ENCODE measurements at regions of chr15 and their contacts with region 1.

Region 1: GRCh38 chr15:42704492-42704926 is 32.4 kb downstream of the CDAN1 start:
- DNase-seq: peak; percentile 25 to 70
- H3K4me3 ChIP-seq: no peak overlapping the region
- H3K27ac ChIP-seq: no peak overlapping the region
- H3K4me1 ChIP-seq: no peaks in the 10 kb centered on the region
- H3K27me3 ChIP-seq: no peaks in the 10 kb centered on the region
- CTCF ChIP-seq: peak; percentile 57 to 90 (median 90)
- EP300 ChIP-seq: no peak
- POLR2A ChIP-seq: no peak
- RAD21 ChIP-seq: peak; percentile 96 to 99

Region 2: GRCh38 chr15:42623951-42624350 is 80.6 kb before region 1 on chr15:
- CTCF ChIA-PET with region 1: no interaction called
- POLR2A ChIA-PET with region 1: no interaction called
- DNase-seq: no peak
- H3K4me3 ChIP-seq: no peak overlapping the region
- H3K27ac ChIP-seq: no peak overlapping the region
- H3K4me1 ChIP-seq: peaks cover 2 to 7% (median 3%) of the 10 kb centered on the region in 4 experiments; a peak in 2 of 7 replicates
- H3K27me3 ChIP-seq: no peaks in the 10 kb centered on the region
- CTCF ChIP-seq: no peak
- EP300 ChIP-seq: no peak
- POLR2A ChIP-seq: no peak
- RAD21 ChIP-seq: no peak

Region 3: GRCh38 chr15:42670451-42670850 is 34.1 kb before region 1 on chr15:
- CTCF ChIA-PET with region 1: no interaction called
- POLR2A ChIA-PET with region 1: no interaction called
- DNase-seq: no peak
- H3K4me3 ChIP-seq: no peak overlapping the region
- H3K27ac ChIP-seq: no peak overlapping the region
- H3K4me1 ChIP-seq: no peaks in the 10 kb centered on the region; a peak in 2 of 7 replicates
- H3K27me3 ChIP-seq: no peaks in the 10 kb centered on the region
- CTCF ChIP-seq: no peak
- EP300 ChIP-seq: no peak
- POLR2A ChIP-seq: no peak
- RAD21 ChIP-seq: no peak

Region 4: DNA sequence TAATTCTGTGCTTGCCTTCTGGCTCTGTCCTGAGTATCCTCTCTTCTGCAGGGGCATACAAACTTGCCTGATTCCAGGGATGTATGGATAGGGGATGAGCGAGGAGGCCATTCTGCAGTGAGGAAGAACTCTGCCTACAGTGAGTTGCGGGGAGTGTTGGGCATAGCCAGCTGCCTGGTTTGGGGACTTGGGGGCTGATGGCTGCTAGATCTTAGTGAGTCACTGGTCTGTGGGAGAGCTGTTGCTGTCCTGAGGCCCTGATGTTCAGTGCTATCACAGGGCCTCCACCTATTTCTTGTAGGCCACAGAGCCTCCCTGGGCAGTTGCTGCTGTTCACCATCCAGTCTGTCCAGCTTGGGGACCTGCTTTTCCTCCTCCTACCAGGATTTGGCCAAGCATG is 12.1 kb after region 1 on chr15:
- CTCF ChIA-PET with region 1: interaction called, 31 read pairs
- POLR2A ChIA-PET with region 1: no interaction called
- DNase-seq: no peak
- H3K4me3 ChIP-seq: no peak overlapping the region
- H3K27ac ChIP-seq: no peak overlapping the region
- H3K4me1 ChIP-seq: no peaks in the 10 kb centered on the region
- H3K27me3 ChIP-seq: no peaks in the 10 kb centered on the region
- CTCF ChIP-seq: no peak
- EP300 ChIP-seq: no peak
- POLR2A ChIP-seq: no peak
- RAD21 ChIP-seq: no peak

Region 5: DNA sequence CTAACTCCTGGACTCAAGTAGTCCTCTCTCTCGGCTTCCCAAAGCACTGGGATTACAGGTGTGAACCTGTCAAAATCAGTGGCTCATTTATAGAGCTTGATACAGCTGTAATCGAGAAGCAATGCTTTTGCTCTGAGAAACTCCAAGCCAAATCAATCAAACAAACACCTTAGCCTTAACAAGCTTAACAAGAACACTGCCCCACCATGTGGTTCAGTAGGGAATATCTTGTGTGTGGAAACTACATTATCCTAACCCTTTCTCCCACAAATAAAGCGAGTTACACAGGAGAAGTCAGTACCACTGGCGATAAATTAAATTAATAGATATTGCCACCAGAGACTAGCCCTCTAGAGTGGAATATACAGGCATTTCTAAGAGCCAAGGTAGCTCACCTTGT is 18.5 kb after region 1 on chr15:
- CTCF ChIA-PET with region 1: interaction called, 31 read pairs
- POLR2A ChIA-PET with region 1: no interaction called
- DNase-seq: no peak
- H3K4me3 ChIP-seq: no peak overlapping the region
- H3K27ac ChIP-seq: no peak overlapping the region
- H3K4me1 ChIP-seq: no peaks in the 10 kb centered on the region
- H3K27me3 ChIP-seq: no peaks in the 10 kb centered on the region
- CTCF ChIP-seq: peak in 2 of 3 experiments; percentile 15 to 24; a peak in 2 of 4 replicates
- EP300 ChIP-seq: no peak
- POLR2A ChIP-seq: no peak
- RAD21 ChIP-seq: peak; percentile 22 to 25